ENCODE measurements at regions of chr12 and their contacts with region 1.

Region 1: GRCh38 chr12:129911428-129912049 is 7.7 kb upstream of the TMEM132D start:
- DNase-seq: peak; percentile 35 to 90 (median 88)
- H3K4me3 ChIP-seq: peak overlapping the region in 7 of 59 donors; percentile 3 to 18 (median 7)
- H3K27ac ChIP-seq: peak overlapping the region in 53 of 59 donors; percentile 2 to 91 (median 71)
- H3K27me3 ChIP-seq: peaks cover 0 to 3% (median 0%) of the 10 kb centered on the region in 45 donors
- CTCF ChIP-seq: peak; percentile 69 to 99 (median 89)

Region 2: GRCh38 chr12:128259556-128260070 is 1651.9 kb before region 1 on chr12:
- intact Hi-C with region 1: loop called (anchors 5 to 10 kb)
- DNase-seq: peak in 8 of 10 donors; percentile 51 to 77 (median 58)
- H3K4me3 ChIP-seq: peak overlapping the region in 38 of 59 donors; percentile 0 to 51 (median 30)
- H3K27ac ChIP-seq: peak overlapping the region in 55 of 59 donors; percentile 9 to 95 (median 83)
- H3K27me3 ChIP-seq: no peaks in the 10 kb centered on the region
- CTCF ChIP-seq: peak; percentile 77 to 95 (median 87)

Region 3: DNA sequence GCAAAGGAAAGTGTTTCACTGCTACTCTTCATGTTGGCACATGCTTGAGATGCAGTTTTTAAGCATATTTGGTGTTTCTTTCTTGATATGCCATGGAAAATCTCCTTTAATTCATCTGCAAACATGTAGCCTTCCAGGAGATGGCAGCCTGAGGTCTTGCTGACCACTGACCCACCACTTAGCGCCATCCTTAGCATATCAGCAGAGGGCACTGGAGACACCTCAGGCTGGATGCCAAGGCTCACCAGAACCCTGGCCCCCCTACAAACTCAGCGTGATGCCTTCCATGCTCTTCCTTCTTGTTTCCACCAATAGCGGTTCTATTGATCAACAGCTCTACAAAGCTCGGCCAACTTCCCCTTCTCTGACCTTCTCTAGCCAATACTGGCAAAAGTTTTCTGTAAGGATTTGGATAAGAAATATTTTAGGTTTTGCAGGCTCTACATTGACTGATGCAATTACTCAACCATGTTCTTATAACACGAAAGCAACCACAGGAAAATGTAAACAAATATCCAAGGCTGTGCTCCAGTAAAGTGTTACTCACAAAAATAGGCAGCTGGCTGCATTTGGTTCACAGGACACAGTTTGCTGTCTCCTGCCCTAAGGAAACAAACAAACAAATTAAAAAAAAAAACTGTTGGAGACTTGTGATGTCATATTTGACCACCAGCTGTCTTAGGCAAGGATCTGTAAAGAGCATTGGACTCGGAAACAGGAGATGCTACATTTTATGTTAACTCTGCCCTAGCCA is 1297.5 kb before region 1 on chr12:
- intact Hi-C with region 1: loop called in 1 of 2 experiments (anchors 10 kb)
- DNase-seq: peak in 2 of 10 donors; percentile 43 to 53
- H3K4me3 ChIP-seq: no peak overlapping the region
- H3K27ac ChIP-seq: no peak overlapping the region
- H3K27me3 ChIP-seq: no peaks in the 10 kb centered on the region
- CTCF ChIP-seq: peak in 31 of 56 donors; percentile 2 to 56 (median 39)

Region 4: GRCh38 chr12:128783129-128783574 is 1128.4 kb before region 1 on chr12:
- intact Hi-C with region 1: loop called in 1 of 2 experiments (anchors 10 kb)
- DNase-seq: no peak
- H3K4me3 ChIP-seq: no peak overlapping the region
- H3K27ac ChIP-seq: no peak overlapping the region
- H3K27me3 ChIP-seq: no peaks in the 10 kb centered on the region
- CTCF ChIP-seq: no peak

Region 5: GRCh38 chr12:128797119-128798118 is 1114.1 kb before region 1 on chr12:
- intact Hi-C with region 1: loop called in 1 of 2 experiments (anchors 10 kb)
- DNase-seq: no peak
- H3K4me3 ChIP-seq: no peak overlapping the region
- H3K27ac ChIP-seq: peak overlapping the region in 34 of 59 donors; percentile 3 to 72 (median 30)
- H3K27me3 ChIP-seq: no peaks in the 10 kb centered on the region
- CTCF ChIP-seq: no peak

Region 6: GRCh38 chr12:128969480-128970055 is 942.0 kb before region 1 on chr12:
- intact Hi-C with region 1: loop called in 1 of 2 experiments (anchors 5 kb)
- DNase-seq: peak; percentile 40 to 86 (median 76)
- H3K4me3 ChIP-seq: peak overlapping the region in 25 of 59 donors; percentile 5 to 42 (median 26)
- H3K27ac ChIP-seq: peak overlapping the region in 49 of 59 donors; percentile 3 to 84 (median 61)
- H3K27me3 ChIP-seq: peaks cover 0 to 17% (median 0%) of the 10 kb centered on the region in 45 donors
- CTCF ChIP-seq: peak in 54 of 56 donors; percentile 14 to 69 (median 56)

Region 7: GRCh38 chr12:129440278-129440677 is 471.3 kb before region 1 on chr12:
- intact Hi-C with region 1: no loop called
- DNase-seq: no peak
- H3K4me3 ChIP-seq: no peak overlapping the region
- H3K27ac ChIP-seq: no peak overlapping the region
- H3K27me3 ChIP-seq: peaks cover 0 to 3% (median 0%) of the 10 kb centered on the region in 45 donors
- CTCF ChIP-seq: no peak

Region 8: GRCh38 chr12:129966146-129966995 is 54.8 kb after region 1 on chr12:
- intact Hi-C with region 1: no loop called
- DNase-seq: no peak
- H3K4me3 ChIP-seq: no peak overlapping the region
- H3K27ac ChIP-seq: no peak overlapping the region
- H3K27me3 ChIP-seq: peaks cover 0 to 3% (median 0%) of the 10 kb centered on the region in 45 donors
- CTCF ChIP-seq: peak in 4 of 56 donors; percentile 14 to 19 (median 18)

Region 9: GRCh38 chr12:130013771-130014484 is 102.4 kb after region 1 on chr12:
- intact Hi-C with region 1: loop called (anchors 2 to 5 kb)
- DNase-seq: peak; percentile 67 to 91 (median 88)
- H3K4me3 ChIP-seq: peak overlapping the region in 56 of 59 donors; percentile 5 to 58 (median 38)
- H3K27ac ChIP-seq: peak overlapping the region in 16 of 59 donors; percentile 9 to 70 (median 42)
- H3K27me3 ChIP-seq: peaks cover 0 to 5% (median 0%) of the 10 kb centered on the region in 45 donors
- CTCF ChIP-seq: peak; percentile 54 to 90 (median 78)

Region 10: GRCh38 chr12:131159660-131160059 is 1248.1 kb after region 1 on chr12:
- intact Hi-C with region 1: no loop called
- DNase-seq: no peak
- H3K4me3 ChIP-seq: no peak overlapping the region
- H3K27ac ChIP-seq: no peak overlapping the region
- H3K27me3 ChIP-seq: peaks cover 0 to 20% (median 0%) of the 10 kb centered on the region in 45 donors
- CTCF ChIP-seq: no peak

Measured in dorsolateral prefrontal cortex (tissue), 120 donors.